ENCODE measurements at regions of chr1 and their contacts with region 1.

Region 1: DNA sequence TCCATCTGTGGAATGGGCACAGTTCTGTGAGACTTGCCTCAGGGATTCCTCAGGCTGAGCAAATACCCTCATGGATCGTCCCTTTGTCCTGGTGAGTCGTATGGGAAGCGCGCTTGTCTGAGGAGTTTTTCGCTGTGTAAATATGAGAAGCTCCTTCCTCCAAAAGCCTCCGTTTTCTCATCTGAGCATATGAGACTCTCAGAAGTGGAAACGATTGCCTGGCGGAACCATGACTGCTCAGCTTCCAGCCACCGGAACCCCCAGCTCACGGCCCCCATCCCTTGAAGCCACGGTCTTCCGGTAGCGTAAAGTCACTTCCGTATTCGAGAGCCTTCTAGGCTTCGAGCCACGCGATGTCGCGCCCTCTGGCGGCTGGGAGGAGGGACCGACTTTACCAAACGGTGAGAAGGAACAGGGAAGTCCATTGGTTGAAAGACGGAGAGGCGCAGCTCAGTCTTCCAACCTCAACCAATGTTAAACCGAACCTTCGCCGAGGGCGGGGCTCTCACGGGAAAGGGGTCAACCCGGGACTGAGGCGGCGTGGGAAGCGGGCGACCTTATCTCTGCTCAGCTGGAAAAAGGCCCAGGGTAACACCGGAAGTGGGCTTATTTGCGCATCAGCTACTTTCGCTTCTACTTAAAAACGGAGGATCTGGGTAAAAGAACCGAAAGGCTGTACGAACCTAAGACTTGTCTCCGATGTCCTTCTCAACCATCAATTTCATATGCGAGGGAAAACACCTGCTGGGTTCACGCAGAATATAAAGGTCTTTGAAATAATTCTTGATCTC is 46.2 kb downstream of the AZIN2 start:
- H3K4me3 Mint-ChIP-seq: peak overlapping the region; percentile 82
- H3K27ac Mint-ChIP-seq: peak overlapping the region; percentile 91
- H3K4me1 Mint-ChIP-seq: peaks cover 10% of the 10 kb centered on the region
- H3K27me3 Mint-ChIP-seq: peaks cover 9% of the 10 kb centered on the region

Region 2: DNA sequence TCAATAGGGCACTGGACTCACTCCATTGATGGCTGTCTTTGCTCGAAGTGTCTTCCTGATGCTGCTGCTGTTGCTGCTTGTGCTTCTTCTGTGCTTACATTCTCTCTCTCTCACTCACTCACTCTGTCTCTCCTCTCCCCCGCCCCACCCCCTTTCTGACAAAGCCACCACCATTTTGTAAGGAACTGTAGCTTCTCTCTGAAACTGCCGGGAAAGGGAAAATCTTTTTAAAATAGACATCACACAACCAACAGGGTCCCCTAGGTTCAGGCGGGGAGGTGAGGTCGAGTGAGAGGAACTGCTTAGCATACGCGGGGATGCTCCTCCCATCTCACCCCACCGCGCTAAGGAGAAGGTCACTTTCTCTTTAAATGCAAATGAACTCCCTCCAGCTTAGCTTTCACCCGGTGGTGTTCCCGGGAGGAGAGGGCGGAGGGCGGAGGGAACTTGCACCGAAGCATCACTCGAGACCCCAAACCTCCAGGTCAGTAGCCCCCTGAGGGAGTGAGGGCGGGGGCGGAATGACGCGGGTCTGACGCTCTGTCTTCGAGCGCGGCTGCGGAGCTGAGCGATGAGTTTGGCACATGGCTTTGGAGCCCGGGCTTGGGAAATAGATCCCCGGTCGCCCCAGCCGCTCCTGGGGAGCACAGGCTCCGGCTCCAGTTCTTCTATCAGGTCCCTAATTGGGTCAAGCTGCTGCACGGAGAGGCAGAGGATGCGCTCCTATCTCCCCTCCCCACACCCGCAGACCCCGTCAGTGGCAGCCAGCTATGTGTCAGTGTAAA is 926.8 kb before region 1 on chr1 and contains the start of gene CCDC28B:
- intact Hi-C with region 1: no loop called
- H3K4me3 Mint-ChIP-seq: peak within 1 kb of the TSS; percentile 86
- H3K27ac Mint-ChIP-seq: peak within 1 kb of the TSS; percentile 69
- H3K4me1 Mint-ChIP-seq: peaks cover 35% of the 10 kb centered on the region
- H3K27me3 Mint-ChIP-seq: peaks cover 10% of the 10 kb centered on the region

Region 3: GRCh38 chr1:32892368-32893197 is 234.6 kb before region 1 on chr1:
- intact Hi-C with region 1: no loop called
- H3K4me3 Mint-ChIP-seq: no peak overlapping the region
- H3K27ac Mint-ChIP-seq: no peak overlapping the region
- H3K4me1 Mint-ChIP-seq: peaks cover 16% of the 10 kb centered on the region
- H3K27me3 Mint-ChIP-seq: peaks cover 93% of the 10 kb centered on the region

Region 4: DNA sequence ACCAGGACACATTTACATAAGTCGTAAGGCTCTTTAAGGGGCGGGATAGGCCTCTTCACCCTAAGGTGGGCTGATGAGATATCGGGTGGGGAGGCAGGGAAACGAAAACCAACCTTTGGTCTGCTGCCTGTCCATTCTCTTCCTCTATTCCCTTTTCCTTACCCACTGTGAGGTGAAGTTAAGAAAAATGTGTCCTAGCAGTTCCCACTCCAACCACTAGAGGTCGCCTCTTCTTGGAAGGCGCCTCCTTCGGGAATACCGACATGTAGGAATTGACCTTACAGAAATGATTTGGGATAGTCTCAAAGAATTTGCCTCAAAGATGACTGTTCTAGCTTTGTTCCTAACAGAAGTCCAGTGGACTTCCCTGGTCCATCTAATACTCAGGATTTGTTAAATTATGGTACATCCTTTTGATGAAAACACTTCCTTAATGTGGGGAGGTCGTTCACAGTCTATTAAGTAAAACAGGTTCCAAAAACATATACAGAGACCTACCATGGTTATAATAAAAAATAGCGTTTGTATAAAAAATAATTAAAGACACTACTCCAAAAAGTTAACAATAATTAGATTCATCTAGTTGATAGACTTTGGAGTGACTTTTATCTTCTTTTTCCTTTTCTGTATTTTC is 32.1 kb before region 1 on chr1:
- intact Hi-C with region 1: loop called (anchors 2 kb)
- H3K4me3 Mint-ChIP-seq: no peak overlapping the region
- H3K27ac Mint-ChIP-seq: no peak overlapping the region
- H3K4me1 Mint-ChIP-seq: peaks cover 32% of the 10 kb centered on the region
- H3K27me3 Mint-ChIP-seq: peaks cover 7% of the 10 kb centered on the region

Region 5: DNA sequence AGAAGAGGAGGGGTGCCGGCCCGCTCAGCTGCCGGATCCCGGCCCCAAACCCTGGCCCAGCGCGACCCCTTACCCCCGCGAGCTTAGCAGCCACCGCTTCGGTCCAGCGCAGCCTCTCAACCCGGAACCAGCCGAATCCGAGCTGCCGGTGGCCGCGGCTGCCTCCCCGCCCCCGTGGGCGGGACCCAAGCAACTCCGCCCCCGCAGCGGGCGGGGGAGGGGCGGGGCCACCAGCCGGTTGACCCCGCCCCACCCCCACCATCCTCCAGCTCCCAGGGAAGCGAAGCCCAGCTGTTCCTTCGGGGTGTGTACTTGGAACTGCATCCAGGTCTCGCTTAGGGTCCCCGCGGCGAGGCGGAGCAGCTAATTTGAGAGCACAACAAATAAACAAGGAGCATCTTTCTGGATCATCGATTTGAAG is 54.7 kb after region 1 on chr1 and contains the start of gene TRIM62:
- intact Hi-C with region 1: loop called (anchors 5 kb)
- H3K4me3 Mint-ChIP-seq: peak within 1 kb of the TSS; percentile 89
- H3K27ac Mint-ChIP-seq: peak within 1 kb of the TSS; percentile 78
- H3K4me1 Mint-ChIP-seq: peaks cover 30% of the 10 kb centered on the region
- H3K27me3 Mint-ChIP-seq: peaks cover 29% of the 10 kb centered on the region

Region 6: DNA sequence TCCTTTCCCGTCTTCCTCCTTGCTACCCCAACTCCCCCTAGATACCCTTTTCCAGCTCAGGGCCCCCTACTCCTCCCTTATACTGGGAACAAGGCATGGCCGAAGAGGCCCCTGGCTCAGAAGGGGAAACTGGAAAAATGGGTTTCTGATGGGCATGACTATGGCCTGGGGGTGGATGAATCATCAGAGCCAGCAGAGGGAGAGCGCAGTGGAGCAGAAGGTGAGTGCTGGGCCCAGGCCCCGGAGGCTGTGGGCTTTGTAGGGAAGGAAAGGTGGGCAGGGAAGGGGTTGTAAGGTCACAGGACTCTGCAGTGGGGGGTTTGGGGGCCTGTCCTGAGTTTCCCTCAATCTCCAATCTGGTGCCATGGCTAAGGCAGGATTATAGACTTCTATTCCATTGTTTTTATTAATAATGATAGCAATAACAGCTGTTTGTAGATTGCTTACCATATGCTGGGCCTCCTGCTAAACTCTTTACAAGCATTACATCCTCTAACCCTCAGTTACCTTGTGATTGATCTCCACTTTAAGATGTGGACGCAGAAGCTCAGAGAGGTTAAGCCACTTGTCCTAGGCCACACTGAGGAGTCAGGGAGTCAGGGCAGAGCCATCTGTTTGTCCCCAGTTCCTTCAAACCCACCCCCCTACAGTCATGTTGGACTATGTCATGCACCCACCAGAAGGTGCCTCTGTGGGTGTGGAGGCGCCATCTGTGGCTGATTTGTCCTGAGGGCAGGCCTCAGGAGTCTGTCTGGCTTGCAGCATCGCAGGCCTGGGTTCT is 92.9 kb after region 1 on chr1:
- intact Hi-C with region 1: no loop called
- H3K4me3 Mint-ChIP-seq: no peak overlapping the region
- H3K27ac Mint-ChIP-seq: no peak overlapping the region
- H3K4me1 Mint-ChIP-seq: peaks cover 17% of the 10 kb centered on the region
- H3K27me3 Mint-ChIP-seq: peaks cover 12% of the 10 kb centered on the region

Region 7: GRCh38 chr1:33460947-33461629 is 333.9 kb after region 1 on chr1:
- intact Hi-C with region 1: loop called (anchors 2 kb)
- H3K4me3 Mint-ChIP-seq: peak overlapping the region; percentile 55
- H3K27ac Mint-ChIP-seq: peak overlapping the region; percentile 91
- H3K4me1 Mint-ChIP-seq: peaks cover 83% of the 10 kb centered on the region
- H3K27me3 Mint-ChIP-seq: peaks cover under 1% of the 10 kb centered on the region

Measured in dendritic cell treated with granulocyte-macrophage colony-stimulating factor and Interleukin-4, amounts not matched to agents 40 ng/mL and 50 ng/mL, for 4 days (primary cell).